ENCODE measurements at regions of chr21 and their contacts with region 1.

Region 1: GRCh38 chr21:36591326-36591970 is 107.5 kb upstream of the SIM2 start:
- DNase-seq: no peak
- ATAC-seq: no peak
- H3K4me3 ChIP-seq: no peak overlapping the region
- H3K27ac ChIP-seq: no peak overlapping the region
- H3K4me1 ChIP-seq: no peaks in the 10 kb centered on the region
- H3K27me3 ChIP-seq: no peaks in the 10 kb centered on the region
- CTCF ChIP-seq: no peak
- POLR2A ChIP-seq: no peak

Region 2: DNA sequence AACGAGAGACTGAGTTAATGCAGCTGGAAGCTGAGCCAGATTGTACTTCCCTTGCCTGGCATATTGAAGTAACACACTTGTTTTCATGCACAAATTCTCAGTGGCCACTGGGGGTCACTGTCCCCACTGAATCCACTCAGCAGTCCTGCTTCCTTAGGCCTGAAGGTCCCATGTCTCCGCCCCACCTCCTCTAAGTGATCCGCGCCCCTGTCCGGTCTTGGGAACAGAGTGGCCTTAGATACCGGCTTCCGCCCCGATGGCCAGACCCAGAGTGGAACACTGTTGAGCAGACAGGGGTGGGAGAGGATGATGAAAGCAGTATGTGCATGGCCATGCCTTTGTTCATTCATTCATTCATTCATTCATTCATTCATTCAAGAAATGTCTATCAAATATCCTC is 171.5 kb before region 1 on chr21:
- intact Hi-C with region 1: loop called (anchors 5 kb)
- DNase-seq: peak; percentile 83 to 90 (median 86)
- ATAC-seq: peak; percentile 94
- H3K4me3 ChIP-seq: no peak overlapping the region
- H3K27ac ChIP-seq: no peak overlapping the region
- H3K4me1 ChIP-seq: peaks cover 15% of the 10 kb centered on the region
- H3K27me3 ChIP-seq: no peaks in the 10 kb centered on the region
- CTCF ChIP-seq: peak; percentile 53 to 91 (median 83)
- POLR2A ChIP-seq: no peak

Region 3: DNA sequence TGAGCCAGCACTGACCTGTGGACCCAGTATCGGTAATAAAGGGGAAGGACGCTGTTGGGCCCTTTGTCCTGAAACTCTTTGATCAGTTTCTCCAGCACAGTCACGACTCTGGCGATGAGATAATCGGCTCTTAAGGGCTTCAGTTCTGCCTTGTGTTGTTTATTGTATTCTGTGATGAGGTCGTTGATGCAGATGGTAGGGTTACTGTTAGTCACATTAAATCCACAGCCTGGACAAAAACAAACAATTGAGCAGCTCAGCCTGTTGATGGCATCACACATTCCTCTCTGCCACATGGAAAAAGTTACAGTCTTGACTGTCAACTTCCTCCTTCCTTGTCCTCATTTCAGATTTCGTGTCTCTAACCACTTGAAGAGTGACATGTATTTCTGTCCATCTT is 165.1 kb after region 1 on chr21:
- intact Hi-C with region 1: no loop called
- DNase-seq: no peak
- ATAC-seq: no peak
- H3K4me3 ChIP-seq: no peak overlapping the region
- H3K27ac ChIP-seq: no peak overlapping the region
- H3K4me1 ChIP-seq: peaks cover 1% of the 10 kb centered on the region
- H3K27me3 ChIP-seq: no peaks in the 10 kb centered on the region
- CTCF ChIP-seq: no peak
- POLR2A ChIP-seq: no peak